ENCODE measurements at regions of chr5 and their contacts with region 1.

Region 1: GRCh38 chr5:36241631-36242533 is at the start of gene NADK2:
- DNase-seq: peak; percentile 94
- ATAC-seq: peak; percentile 87
- H3K4me3 ChIP-seq: peak within 1 kb of the TSS; percentile 76 to 93 (median 88)
- H3K27ac ChIP-seq: peak within 1 kb of the TSS; percentile 95
- H3K4me1 ChIP-seq: peaks cover 50% of the 10 kb centered on the region
- H3K27me3 ChIP-seq: no peaks in the 10 kb centered on the region
- CTCF ChIP-seq: peak; percentile 78
- EP300 ChIP-seq: peak in 1 of 2 experiments; percentile 19; a peak in 1 of 4 replicates
- POLR2A ChIP-seq: peak; percentile 64 to 80
- RAD21 ChIP-seq: no peak; the same call in 1 of the 2 replicates
- total RNA-seq, gene NADK2: 71.4 and 94.9 TPM in 2 replicates

Region 2: GRCh38 chr5:36125868-36126267 is 116.0 kb before region 1 on chr5:
- CTCF ChIA-PET with region 1: no interaction called
- POLR2A ChIA-PET with region 1: no interaction called
- in situ Hi-C with region 1: no loop called
- intact Hi-C with region 1: no loop called
- DNase-seq: no peak
- ATAC-seq: no peak
- H3K4me3 ChIP-seq: no peak overlapping the region
- H3K27ac ChIP-seq: no peak overlapping the region
- H3K4me1 ChIP-seq: no peaks in the 10 kb centered on the region
- H3K27me3 ChIP-seq: no peaks in the 10 kb centered on the region
- CTCF ChIP-seq: no peak
- EP300 ChIP-seq: no peak
- POLR2A ChIP-seq: no peak
- RAD21 ChIP-seq: no peak

Region 3: GRCh38 chr5:36138900-36139683 is 102.8 kb before region 1 on chr5:
- CTCF ChIA-PET with region 1: no interaction called
- POLR2A ChIA-PET with region 1: interaction called, 11 read pairs
- in situ Hi-C with region 1: no loop called
- intact Hi-C with region 1: no loop called
- DNase-seq: peak; percentile 78
- ATAC-seq: peak; percentile 100
- H3K4me3 ChIP-seq: peak overlapping the region; percentile 48 to 67 (median 60)
- H3K27ac ChIP-seq: peak overlapping the region; percentile 52
- H3K4me1 ChIP-seq: peaks cover 25% of the 10 kb centered on the region
- H3K27me3 ChIP-seq: no peaks in the 10 kb centered on the region
- CTCF ChIP-seq: no peak
- EP300 ChIP-seq: no peak
- POLR2A ChIP-seq: peak in 1 of 2 experiments; percentile 64; a peak in 2 of 4 replicates
- RAD21 ChIP-seq: no peak

Region 4: DNA sequence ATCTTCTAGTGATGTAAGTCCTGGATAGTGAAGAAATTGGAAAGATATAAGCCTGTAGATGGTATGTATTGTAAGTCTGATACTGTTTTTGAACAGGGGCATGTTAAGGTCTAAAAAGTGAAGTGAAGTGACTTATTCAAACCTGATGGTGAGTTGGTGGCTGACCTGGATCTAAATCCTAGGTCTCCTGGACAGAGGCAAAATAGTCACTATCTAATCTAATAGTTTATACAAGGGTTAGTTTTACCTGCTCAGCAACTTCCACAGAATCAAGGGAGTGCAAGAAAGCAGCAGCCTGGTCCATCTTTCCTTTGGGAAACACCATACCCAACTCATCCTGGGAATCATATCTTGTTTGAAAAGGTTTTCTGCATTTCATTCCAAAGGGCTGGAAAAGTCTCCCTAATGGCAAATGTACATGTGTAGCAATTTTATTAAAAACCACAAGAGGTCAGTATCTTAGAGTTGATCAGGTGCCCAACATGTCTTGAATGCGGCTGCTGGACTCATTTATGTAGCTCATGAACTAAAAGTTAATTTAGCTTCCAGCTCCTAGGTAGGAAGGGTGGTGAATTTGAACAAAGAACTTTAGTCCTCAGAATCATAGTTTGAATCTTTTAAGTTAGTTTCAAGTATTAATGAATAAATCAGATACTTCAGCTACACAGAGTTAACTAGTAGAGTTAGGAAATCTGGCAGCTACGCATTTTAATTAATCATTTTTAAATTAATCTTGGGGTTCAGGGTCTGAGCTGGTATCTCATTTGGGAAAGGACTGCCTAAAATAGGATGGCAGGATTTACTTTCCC is 64.0 kb before region 1 on chr5:
- CTCF ChIA-PET with region 1: no interaction called
- POLR2A ChIA-PET with region 1: interaction called, 34 read pairs
- in situ Hi-C with region 1: no loop called
- intact Hi-C with region 1: loop called (anchors 1 kb)
- DNase-seq: peak; percentile 48
- ATAC-seq: peak; percentile 45; the same call in 2 of the 3 replicates
- H3K4me3 ChIP-seq: no peak overlapping the region
- H3K27ac ChIP-seq: peak overlapping the region; percentile 23
- H3K4me1 ChIP-seq: peaks cover 60% of the 10 kb centered on the region
- H3K27me3 ChIP-seq: no peaks in the 10 kb centered on the region
- CTCF ChIP-seq: peak; percentile 71
- EP300 ChIP-seq: no peak
- POLR2A ChIP-seq: no peak
- RAD21 ChIP-seq: 0 out of 2 replicates have a peak, but pooled peaks have one; percentile 35

Region 5: DNA sequence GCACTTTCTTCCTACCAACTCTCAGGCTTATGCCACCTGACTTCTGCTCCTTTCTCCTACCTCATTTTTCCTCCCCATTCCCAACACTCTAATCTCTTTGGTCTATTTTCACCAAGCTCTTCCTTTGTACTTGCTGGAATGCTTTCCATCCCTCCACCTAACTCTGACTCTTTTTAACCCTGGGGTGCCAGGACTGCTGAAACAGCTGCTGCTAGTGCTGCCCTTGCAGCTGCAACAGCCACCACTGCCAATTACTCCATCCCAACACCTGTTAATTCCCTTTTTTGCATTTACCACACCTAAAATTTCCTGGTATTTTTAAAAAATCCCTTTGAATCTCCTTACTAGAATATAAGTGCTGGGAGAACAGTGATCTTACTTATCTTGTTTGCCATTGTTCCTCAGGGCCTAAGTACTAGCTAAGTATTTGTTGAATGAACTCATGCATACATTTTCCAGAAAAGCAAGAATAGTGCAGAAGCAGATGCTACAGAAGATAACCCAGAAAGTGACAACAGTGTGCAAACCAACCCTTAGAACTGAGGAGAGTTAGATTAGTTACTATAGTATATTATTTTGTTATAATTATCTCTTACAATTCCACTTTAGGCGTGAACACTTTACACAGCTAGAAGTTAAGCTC is 11.6 kb before region 1 on chr5:
- CTCF ChIA-PET with region 1: no interaction called
- POLR2A ChIA-PET with region 1: interaction called, 68 read pairs
- in situ Hi-C with region 1: no loop called
- intact Hi-C with region 1: loop called (anchors 1 kb)
- DNase-seq: no peak
- ATAC-seq: no peak; the same call in 2 of the 3 replicates
- H3K4me3 ChIP-seq: no peak overlapping the region
- H3K27ac ChIP-seq: no peak overlapping the region
- H3K4me1 ChIP-seq: peaks cover 27% of the 10 kb centered on the region
- H3K27me3 ChIP-seq: no peaks in the 10 kb centered on the region
- CTCF ChIP-seq: no peak
- EP300 ChIP-seq: no peak
- POLR2A ChIP-seq: no peak
- RAD21 ChIP-seq: no peak

Region 6: GRCh38 chr5:36403632-36404311 is 161.9 kb after region 1 on chr5:
- CTCF ChIA-PET with region 1: no interaction called
- POLR2A ChIA-PET with region 1: interaction called, 47 read pairs
- in situ Hi-C with region 1: no loop called
- intact Hi-C with region 1: no loop called
- DNase-seq: no peak
- ATAC-seq: peak; percentile 25
- H3K4me3 ChIP-seq: no peak overlapping the region
- H3K27ac ChIP-seq: peak overlapping the region; percentile 76
- H3K4me1 ChIP-seq: peaks cover 46% of the 10 kb centered on the region
- H3K27me3 ChIP-seq: no peaks in the 10 kb centered on the region; a peak in 1 of 5 replicates
- CTCF ChIP-seq: no peak
- EP300 ChIP-seq: no peak
- POLR2A ChIP-seq: no peak
- RAD21 ChIP-seq: no peak